ENCODE measurements at regions of chr9 and their contacts with region 1.

Region 1: DNA sequence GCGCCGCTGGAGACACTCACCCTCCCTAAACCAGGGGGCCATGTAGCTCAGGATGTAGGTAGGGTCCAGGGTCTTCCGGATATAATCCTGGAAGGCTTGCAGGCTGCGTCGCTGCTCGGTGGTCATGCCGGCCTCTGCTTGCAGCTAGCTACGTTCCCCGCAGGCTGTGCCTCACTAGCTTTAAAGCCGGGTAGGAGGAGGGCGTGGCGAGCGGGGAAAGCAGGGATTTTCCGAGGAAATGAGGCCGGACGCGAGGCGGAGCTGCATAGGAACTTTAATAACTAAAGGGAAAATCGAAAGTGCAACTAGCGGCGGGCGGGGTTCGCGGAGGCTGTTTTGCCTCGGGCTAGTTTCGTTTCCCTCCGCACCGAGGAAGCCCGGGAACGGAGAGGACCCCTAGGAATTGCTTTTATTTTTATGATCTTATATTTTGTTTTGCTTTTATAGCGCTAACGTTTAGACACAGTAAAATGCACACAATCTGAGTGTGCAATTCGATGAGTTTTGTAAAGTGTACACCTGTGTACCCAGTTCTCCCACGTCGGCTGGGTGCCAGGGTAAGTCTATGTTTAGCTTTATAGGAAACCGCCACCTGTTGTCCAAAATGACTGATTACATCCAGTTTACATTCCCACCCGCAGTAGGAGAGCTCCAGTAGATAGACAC is at the start of gene RIGI:
- DNase-seq: peak; percentile 97
- H3K4me3 ChIP-seq: peak within 1 kb of the TSS; percentile 78 to 88 (median 83)
- H3K27ac ChIP-seq: peak within 1 kb of the TSS; percentile 61
- H3K4me1 ChIP-seq: peaks cover 15% of the 10 kb centered on the region
- H3K27me3 ChIP-seq: no peaks in the 10 kb centered on the region
- CTCF ChIP-seq: peak; percentile 29 to 43
- POLR2A ChIP-seq: peak; percentile 87
- total RNA-seq, gene RIGI: 11.4 and 13.3 TPM in 2 replicates

Region 2: GRCh38 chr9:32384364-32385151 is 141.6 kb before region 1 on chr9 and contains the start of gene ACO1:
- CTCF ChIA-PET with region 1: interaction called, 172 read pairs
- POLR2A ChIA-PET with region 1: interaction called, 15 read pairs
- dilution Hi-C with region 1: no loop called
- intact Hi-C with region 1: loop called (anchors 1 kb)
- DNase-seq: peak; percentile 91
- H3K4me3 ChIP-seq: peak within 1 kb of the TSS; percentile 50 to 91 (median 78)
- H3K27ac ChIP-seq: peak within 1 kb of the TSS; percentile 51
- H3K4me1 ChIP-seq: peaks cover 28% of the 10 kb centered on the region
- H3K27me3 ChIP-seq: no peaks in the 10 kb centered on the region
- CTCF ChIP-seq: no peak
- POLR2A ChIP-seq: peak; percentile 74
- total RNA-seq, gene ACO1: 54.1 and 56.9 TPM in 2 replicates

Region 3: DNA sequence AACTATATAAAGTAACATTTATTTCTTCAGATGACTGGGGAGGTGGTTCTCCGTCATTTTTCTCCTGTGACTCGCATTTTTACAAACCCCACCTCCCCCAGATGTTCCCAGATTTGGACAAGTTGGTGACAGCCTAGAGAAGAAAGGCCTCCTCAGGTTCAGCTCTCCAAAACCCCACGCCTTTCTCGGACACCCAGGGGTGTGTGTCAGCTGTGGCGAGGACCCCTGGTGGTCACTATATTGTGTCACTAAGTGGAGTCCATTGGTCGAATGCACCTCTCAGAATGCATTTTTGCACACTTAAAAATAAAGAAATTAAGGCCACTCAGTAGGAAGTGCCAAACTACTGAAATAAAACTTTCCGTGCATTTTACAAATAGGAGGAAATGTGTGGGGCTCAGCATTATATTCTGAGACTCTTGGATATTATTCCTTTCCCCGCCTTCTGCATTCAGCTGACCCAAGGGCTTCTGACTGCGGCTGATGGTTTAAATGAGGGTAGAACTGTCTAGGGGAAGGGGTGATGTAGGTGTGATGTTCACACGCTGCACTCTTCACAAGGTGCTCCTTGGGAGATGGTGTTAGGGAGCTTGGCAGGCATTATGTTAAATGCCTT is 94.1 kb before region 1 on chr9:
- CTCF ChIA-PET with region 1: interaction called, 15 read pairs
- POLR2A ChIA-PET with region 1: interaction called, 6 read pairs
- dilution Hi-C with region 1: no loop called
- intact Hi-C with region 1: loop called (anchors 1 kb)
- DNase-seq: peak; percentile 54
- H3K4me3 ChIP-seq: no peak overlapping the region
- H3K27ac ChIP-seq: peak overlapping the region; percentile 93
- H3K4me1 ChIP-seq: peaks cover 34% of the 10 kb centered on the region
- H3K27me3 ChIP-seq: no peaks in the 10 kb centered on the region
- CTCF ChIP-seq: peak; percentile 63 to 67
- POLR2A ChIP-seq: no peak

Region 4: DNA sequence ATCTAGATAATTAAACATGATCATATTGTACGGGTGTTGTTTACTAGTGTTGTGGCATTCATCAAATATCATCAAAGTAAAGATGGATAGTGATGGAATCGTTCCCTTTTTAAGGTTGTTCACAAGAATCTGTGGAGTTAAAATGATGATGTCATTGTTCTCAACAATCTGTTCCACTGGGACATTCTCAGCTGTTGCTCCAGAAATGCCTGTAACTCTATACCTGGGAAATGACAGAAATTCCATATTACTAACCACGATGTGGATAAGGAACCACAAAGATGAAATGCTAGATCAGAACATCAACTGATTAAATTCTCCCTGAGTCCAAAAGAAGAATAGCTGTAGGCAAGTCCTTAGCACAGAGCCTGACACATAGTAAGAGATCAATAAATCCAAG is 38.2 kb before region 1 on chr9:
- CTCF ChIA-PET with region 1: interaction called, 20 read pairs
- POLR2A ChIA-PET with region 1: no interaction called
- dilution Hi-C with region 1: no loop called
- intact Hi-C with region 1: no loop called
- DNase-seq: no peak
- H3K4me3 ChIP-seq: no peak overlapping the region
- H3K27ac ChIP-seq: no peak overlapping the region
- H3K4me1 ChIP-seq: no peaks in the 10 kb centered on the region
- H3K27me3 ChIP-seq: no peaks in the 10 kb centered on the region
- CTCF ChIP-seq: no peak
- POLR2A ChIP-seq: no peak

Region 5: GRCh38 chr9:32508728-32509127 is 17.4 kb before region 1 on chr9:
- CTCF ChIA-PET with region 1: interaction called, 28 read pairs
- POLR2A ChIA-PET with region 1: interaction called, 3 read pairs
- dilution Hi-C with region 1: no loop called
- intact Hi-C with region 1: no loop called
- DNase-seq: no peak
- H3K4me3 ChIP-seq: no peak overlapping the region
- H3K27ac ChIP-seq: no peak overlapping the region
- H3K4me1 ChIP-seq: peaks cover 13% of the 10 kb centered on the region
- H3K27me3 ChIP-seq: no peaks in the 10 kb centered on the region
- CTCF ChIP-seq: no peak
- POLR2A ChIP-seq: no peak

Region 6: DNA sequence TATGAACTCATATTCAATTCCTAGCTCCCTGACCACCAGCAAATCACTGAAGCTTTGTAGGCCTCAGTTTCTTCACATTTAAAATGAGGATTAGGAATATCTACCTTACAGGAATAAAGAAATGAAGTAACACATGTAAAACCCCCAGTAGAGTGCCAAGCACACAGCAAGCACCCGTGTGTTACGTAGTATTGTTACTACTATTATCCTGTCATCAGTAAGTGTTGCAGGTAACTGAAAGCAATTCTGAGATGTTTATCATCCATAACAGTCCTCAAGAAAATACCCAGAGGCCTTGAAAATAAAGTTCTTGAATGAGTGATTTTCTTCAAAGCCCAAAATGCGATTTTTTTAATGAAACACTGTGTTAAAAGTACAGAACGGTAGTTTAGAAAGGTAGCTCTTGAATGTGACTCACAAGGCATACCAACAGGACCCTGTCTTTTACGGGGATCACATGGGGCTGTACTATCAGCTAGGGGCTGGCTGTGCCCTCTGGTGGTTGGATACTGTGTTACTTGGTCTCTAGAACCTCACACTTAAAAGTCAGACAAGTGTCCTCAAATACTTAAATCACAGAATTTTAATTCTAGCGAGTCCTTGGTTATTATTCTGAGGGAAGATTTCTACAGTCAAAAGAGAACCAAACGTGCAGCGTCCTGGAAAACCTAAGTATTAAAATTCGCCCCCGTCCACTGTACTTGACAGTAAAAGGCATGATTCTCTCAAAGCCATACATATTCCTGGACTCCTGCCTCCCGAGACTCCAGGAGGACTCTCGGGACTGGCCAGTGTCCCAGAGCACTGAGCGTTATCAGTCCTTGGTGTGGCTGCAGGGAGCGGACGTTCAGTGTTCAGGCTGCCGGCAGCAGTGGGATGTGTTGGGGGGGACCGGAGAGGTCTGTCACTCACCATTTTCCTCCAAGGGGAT is 46.1 kb after region 1 on chr9:
- CTCF ChIA-PET with region 1: interaction called, 20 read pairs
- POLR2A ChIA-PET with region 1: no interaction called
- dilution Hi-C with region 1: no loop called
- intact Hi-C with region 1: loop called (anchors 1 kb)
- DNase-seq: peak; percentile 88
- H3K4me3 ChIP-seq: peak overlapping the region; percentile 78 to 89 (median 88)
- H3K27ac ChIP-seq: peak overlapping the region; percentile 19
- H3K4me1 ChIP-seq: peaks cover 18% of the 10 kb centered on the region
- H3K27me3 ChIP-seq: peaks cover 0 to 4% of the 10 kb centered on the region in 2 experiments
- CTCF ChIP-seq: peak; percentile 74 to 80
- POLR2A ChIP-seq: no peak

Measured in endothelial cell of umbilical vein (primary cell).